ENCODE measurements at regions of chr17 and their contacts with region 1.

Region 1: DNA sequence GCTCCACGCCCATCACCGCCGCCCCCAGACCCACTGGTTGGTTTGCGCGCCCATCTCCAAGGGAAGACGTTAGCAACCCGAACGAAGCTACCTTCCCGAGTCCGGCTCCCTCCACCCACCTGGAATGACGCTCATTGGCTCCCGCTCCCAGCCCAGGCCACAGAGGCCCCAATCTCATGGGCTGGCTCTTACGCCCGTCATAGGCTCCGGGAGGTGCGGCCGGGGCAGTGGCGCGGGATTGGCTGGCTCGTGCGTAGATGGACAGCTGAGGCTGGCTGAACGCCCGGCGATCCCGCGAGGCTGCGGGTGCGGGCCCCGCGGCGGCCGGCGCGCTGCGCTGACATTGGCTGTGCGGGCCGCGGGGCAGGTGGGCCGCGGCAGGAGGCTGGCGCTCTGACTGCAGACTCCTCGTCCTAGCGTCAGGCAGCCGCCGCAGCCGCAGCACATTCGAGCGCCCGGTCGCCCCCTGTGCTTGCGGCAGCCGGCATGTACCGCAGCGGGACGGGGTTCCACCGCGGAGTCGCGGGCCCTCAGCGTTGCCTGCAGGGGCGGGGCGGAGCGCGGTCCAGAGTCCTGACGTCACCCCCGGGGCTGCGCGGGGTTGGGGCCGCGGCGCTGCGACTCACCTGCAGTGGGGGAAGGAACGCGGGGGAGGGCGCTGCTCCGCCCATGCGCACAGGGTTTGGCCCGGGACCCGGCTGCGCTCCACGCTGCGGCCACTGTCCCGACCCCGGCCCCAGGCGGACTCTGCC is 453 bp upstream of the MYH10 start:
- DNase-seq: peak; percentile 93 to 99
- H3K4me3 ChIP-seq: peak overlapping the region; percentile 68 to 90
- H3K27ac ChIP-seq: peak overlapping the region; percentile 94 to 98
- H3K4me1 ChIP-seq: peaks cover 0 to 4% of the 10 kb centered on the region in 2 donors
- H3K27me3 ChIP-seq: no peaks in the 10 kb centered on the region
- CTCF ChIP-seq: peak in 2 of 3 experiments; percentile 9 to 37

Region 2: DNA sequence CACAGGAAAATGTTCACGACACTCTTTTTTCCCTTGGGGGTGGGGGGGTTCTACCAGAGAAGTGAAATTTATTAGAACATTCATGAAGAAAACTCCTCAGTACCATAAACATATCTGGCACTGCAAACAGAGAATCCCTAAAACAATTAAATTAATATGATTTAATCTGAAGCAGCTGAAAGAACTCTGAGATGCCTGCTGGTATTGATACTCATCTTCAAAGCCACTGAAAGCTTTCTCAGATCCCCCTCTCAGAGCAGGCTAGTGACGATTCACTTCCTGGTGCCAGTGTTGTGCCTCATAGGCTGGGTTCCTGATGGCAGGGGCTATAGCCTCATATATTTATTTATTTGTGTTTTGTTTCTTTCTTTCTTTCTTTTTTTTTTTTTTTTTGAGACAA is 53.1 kb before region 1 on chr17:
- intact Hi-C with region 1: loop called (anchors 2 kb)
- DNase-seq: no peak
- H3K4me3 ChIP-seq: peak overlapping the region in 1 of 2 donors; percentile 10
- H3K27ac ChIP-seq: peak overlapping the region; percentile 74 to 79
- H3K4me1 ChIP-seq: peaks cover 4 to 48% of the 10 kb centered on the region in 2 donors
- H3K27me3 ChIP-seq: no peaks in the 10 kb centered on the region
- CTCF ChIP-seq: no peak

Region 3: DNA sequence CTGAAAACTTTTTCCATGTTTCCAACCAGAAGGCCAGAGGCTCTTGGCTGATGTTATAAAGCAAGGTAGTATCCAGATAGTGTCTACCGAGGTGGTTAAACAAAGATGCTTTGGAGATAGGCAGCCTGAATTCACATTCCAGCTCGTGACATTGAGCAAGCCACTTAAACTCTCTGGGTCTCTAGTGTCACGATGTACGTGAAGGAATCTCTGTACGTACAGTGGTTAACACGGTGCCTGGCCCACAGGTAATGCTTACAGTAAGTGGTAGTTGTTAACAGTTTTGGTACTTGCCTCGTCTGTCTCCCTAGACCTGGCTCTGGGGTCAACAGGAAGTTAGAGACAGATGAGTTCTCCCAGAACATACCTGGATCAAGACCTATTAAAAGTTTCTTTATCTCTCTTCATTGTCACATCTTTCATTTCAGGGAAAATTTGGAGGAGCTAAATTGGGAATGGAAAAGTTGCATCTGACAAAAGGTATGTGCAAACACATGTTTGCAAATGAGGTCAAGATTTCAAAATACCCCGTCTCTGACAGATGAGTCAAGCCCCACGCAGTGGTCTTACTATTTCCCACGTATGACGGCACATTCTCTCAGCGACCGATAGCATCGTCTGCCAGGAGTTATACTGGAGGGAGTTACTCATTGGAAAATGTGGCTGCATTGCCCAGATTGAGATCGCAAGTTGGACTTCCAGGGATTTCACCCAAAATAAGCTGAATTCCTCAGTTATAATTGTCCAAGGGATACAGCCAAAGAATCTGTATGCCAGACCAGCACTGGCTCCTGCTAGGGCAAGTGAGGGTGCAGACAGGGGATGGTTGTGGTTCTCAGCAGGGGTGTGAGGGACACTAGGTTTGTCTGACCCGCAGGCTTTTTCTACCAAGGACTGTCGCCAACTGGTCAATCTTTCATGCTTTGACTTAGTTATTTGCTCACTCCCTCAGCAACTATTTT is 18.5 kb after region 1 on chr17:
- intact Hi-C with region 1: loop called (anchors 1 kb)
- DNase-seq: peak; percentile 76 to 96
- H3K4me3 ChIP-seq: no peak overlapping the region
- H3K27ac ChIP-seq: peak overlapping the region; percentile 89 to 98
- H3K4me1 ChIP-seq: peaks cover 6 to 32% of the 10 kb centered on the region in 2 donors
- H3K27me3 ChIP-seq: no peaks in the 10 kb centered on the region
- CTCF ChIP-seq: no peak

Region 4: DNA sequence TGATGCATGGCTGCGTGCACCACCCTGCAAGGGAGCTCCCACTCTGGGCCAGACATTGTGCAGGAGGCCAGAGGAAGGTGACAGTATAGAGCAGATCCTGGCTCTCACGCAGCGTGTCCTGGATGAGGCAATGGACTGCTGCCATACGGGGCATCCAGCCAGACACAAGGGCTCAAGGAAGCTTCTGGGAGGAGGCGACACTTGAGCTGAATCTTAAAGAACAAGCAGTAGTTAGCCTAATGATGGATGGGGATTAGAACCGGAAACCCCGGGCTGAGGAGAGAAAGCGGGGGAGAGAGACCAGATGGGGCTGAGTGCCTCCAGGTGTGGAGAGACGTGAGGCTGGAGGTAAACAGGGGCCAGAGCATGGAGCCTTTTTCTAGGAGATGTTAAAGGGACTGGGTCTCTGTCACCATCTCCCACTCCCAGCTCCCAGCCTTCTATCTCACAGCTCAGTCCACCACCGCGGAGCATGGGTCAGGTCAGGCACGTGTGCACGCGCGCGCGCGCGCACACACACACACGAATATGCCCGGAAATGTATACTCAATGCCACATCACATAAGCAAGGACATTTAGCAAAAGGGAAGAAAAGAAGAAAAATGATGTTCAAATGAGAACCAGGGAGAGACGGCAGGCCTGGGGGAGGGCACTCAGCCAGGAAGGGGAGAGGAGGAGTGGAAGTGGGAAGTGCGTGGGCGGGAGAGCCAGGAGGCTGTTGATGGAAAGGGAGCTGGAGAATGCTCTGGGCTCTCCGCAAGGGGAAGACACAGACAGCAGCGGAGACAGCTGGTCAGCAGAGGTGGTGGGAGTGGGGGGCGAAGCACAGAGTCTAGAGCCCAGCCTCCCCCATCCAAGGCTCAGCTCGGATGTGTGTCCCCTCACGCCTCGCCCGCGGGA is 67.4 kb after region 1 on chr17:
- intact Hi-C with region 1: loop called (anchors 1 kb)
- DNase-seq: peak in 1 of 2 donors; percentile 84
- H3K4me3 ChIP-seq: peak overlapping the region; percentile 19 to 41
- H3K27ac ChIP-seq: peak overlapping the region; percentile 95
- H3K4me1 ChIP-seq: peaks cover 22 to 40% of the 10 kb centered on the region in 2 donors
- H3K27me3 ChIP-seq: no peaks in the 10 kb centered on the region
- CTCF ChIP-seq: no peak

Region 5: DNA sequence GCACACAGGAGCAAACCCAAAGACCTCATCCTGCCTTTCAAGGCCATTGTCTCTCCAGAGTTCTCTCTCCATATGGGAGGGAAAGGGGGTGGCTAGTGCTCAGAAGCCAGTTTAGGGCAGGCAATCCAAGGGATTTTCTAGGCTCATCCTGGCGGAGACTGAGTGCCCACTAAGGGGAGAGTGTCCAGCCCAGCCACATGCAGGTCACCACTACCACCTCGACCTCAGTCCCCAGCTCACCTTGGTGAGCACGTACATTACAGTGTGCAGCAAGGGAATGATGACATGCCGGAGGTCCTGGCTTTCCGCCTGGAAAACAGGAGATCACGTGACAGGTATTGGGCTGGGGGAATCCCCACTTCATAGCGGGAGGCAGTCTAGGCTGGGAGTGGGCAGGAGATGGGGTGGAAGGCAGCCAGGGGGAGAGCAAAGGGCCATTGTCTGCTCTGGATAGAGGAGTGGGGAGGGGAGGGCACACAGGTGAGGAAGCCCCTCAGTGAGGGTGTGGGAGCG is 206.6 kb after region 1 on chr17:
- intact Hi-C with region 1: no loop called
- DNase-seq: peak in 1 of 2 donors; percentile 44
- H3K4me3 ChIP-seq: no peak overlapping the region
- H3K27ac ChIP-seq: no peak overlapping the region
- H3K4me1 ChIP-seq: no peaks in the 10 kb centered on the region
- H3K27me3 ChIP-seq: peaks cover 4% of the 10 kb centered on the region
- CTCF ChIP-seq: no peak

Measured in ascending aorta (tissue), 2 donors.